ENCODE measurements at regions of chr20 and their contacts with region 1.

Region 1: DNA sequence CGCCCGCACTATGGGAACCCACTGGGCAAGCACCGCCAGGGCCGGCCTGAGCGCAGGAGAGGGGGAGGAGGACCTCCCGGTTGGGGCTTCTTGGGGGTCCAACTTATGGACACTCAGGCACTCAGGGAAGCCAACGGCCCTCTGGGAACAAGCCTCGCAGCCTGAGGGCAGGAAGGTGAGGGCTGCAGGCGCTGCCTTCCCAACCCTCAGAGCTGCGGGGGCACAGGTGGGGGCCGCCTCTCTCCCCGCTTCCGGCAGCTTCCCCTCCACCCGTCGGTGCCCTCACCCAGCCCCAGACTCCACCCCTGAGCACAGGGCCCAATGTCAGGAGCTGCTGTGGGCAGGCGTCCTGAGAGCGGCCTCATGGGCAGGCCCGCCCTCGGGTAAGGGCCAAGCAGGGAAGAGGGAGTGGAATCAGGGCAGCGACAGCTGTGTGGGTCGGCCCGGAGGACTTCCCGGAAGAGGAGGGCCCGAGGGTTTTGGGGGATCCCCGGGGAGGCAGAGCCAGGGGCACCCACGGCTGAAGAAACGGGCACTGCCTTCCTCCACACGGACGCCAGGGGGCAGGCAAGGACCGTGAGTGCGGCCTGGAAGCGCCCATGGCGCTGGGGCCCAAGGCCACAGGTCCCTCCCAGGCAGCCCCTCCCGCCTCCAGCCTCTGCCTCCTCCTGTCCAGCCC is 488 bp upstream of the PTK6 start:
- DNase-seq: peak; percentile 99
- CTCF ChIP-seq: peak; percentile 98

Region 2: DNA sequence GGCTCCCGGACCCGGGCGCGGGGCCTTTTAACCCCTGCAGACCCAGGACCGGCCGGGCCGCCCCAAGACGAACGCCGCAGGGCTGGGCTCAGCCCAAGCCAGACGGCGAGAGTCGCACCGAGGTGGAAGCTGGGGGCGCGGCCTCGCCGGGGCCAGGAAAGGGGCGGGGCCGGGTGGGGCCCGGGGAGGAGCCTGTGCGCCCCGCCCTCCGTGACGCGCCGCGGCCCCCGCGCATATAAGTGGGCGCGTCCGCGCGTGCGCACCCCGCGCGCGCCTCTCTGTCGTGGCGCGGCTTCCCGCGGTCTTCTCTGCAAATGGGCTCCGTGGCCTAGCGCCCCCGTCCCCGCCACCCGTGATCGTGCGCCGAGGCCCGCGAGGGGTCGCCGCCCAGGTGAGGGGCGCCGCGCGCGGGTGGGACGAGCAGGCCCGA is 17.1 kb before region 1 on chr20 and contains the start of gene PPDPF:
- CTCF ChIA-PET with region 1: interaction called, 35 read pairs
- POLR2A ChIA-PET with region 1: interaction called, 5 read pairs
- DNase-seq: peak; percentile 99
- CTCF ChIP-seq: peak; percentile 2

Region 3: GRCh38 chr20:63562461-63563224 is 25.0 kb after region 1 on chr20:
- CTCF ChIA-PET with region 1: interaction called, 15 read pairs
- POLR2A ChIA-PET with region 1: no interaction called
- DNase-seq: no peak
- CTCF ChIP-seq: no peak

Region 4: DNA sequence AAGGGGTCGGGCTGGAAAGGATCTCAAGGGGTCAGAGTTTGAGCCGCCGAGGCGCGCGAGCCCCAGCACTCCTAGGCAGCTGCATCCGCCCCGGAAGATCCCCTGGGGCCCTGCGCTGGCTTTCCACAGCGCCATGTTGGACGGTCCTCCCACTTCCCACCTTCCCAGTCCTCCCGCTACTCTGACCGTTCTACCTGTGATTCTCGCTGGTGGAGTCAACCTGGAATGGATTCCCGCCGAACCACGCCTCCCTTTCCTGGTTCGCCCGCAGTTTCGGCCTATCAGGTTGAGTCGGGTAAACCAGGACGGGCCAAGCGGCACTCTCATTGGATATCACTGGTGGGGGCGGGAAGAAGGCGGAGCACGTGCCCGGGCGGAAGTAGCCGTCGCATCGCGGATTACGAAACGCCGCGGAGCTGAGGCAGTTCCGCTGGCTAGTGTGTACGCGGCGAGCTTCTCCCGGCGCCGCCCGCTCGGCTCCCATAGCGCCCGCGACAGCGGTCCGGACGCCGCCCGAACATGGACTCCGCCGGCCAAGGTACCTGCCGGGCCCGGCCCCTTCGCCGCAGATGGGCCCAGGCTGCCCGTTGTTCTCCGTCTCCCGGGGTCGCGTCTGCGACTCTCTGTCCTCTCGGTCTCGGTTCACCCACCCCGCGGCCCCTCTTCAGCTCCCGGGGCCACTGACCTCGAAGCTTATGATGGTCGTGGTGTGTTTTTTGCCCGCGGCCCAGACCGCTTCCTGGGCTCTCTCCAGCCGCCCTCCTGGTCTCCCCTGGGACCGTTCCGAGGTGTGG is 327.4 kb after region 1 on chr20 and contains the start of gene TPD52L2:
- CTCF ChIA-PET with region 1: interaction called, 33 read pairs
- POLR2A ChIA-PET with region 1: no interaction called
- DNase-seq: peak; percentile 97
- CTCF ChIP-seq: no peak